Pancreas (tissue), 10 donors: ENCODE measurements at regions of chr19 and their contacts with region 1.

Region 1: GRCh38 chr19:12847159-12848139 is 9.1 kb downstream of the MAST1 start:
- DNase-seq: peak; percentile 73 to 99 (median 91)
- ATAC-seq: peak; percentile 99 to 100 (median 100)
- H3K4me3 ChIP-seq: peak overlapping the region in 1 of 4 donors; percentile 20
- H3K27ac ChIP-seq: no peak overlapping the region
- H3K4me1 ChIP-seq: peaks cover 0 to 3% (median 0%) of the 10 kb centered on the region in 3 donors
- H3K27me3 ChIP-seq: no peaks in the 10 kb centered on the region
- CTCF ChIP-seq: peak; percentile 99 to 100 (median 99)

Region 2: GRCh38 chr19:12574036-12574435 is 273.4 kb before region 1 on chr19:
- intact Hi-C with region 1: loop called in 1 of 3 experiments (anchors 10 kb)
- DNase-seq: no peak
- ATAC-seq: no peak
- H3K4me3 ChIP-seq: no peak overlapping the region
- H3K27ac ChIP-seq: no peak overlapping the region
- H3K4me1 ChIP-seq: no peaks in the 10 kb centered on the region
- H3K27me3 ChIP-seq: no peaks in the 10 kb centered on the region
- CTCF ChIP-seq: no peak

Region 3: GRCh38 chr19:12666265-12667048 is 181.0 kb before region 1 on chr19 and contains the starts of genes MAN2B1 and WDR83:
- intact Hi-C with region 1: no loop called
- DNase-seq: peak in 5 of 6 donors; percentile 58 to 88 (median 72)
- ATAC-seq: peak; percentile 77 to 87 (median 84)
- H3K4me3 ChIP-seq: peak within 1 kb of the TSS; percentile 75 to 84 (median 82)
- H3K27ac ChIP-seq: peak within 1 kb of the TSS in 3 of 4 donors; percentile 33 to 63 (median 40)
- H3K4me1 ChIP-seq: peaks cover 4 to 29% (median 7%) of the 10 kb centered on the region in 3 donors
- H3K27me3 ChIP-seq: no peaks in the 10 kb centered on the region
- CTCF ChIP-seq: no peak
- total RNA-seq, gene MAN2B1: 33.2 to 92.8 (median 59.2) TPM
- total RNA-seq, gene WDR83: 3.5 to 8.8 (median 5.7) TPM

Region 4: GRCh38 chr19:12696366-12697335 is 150.8 kb before region 1 on chr19 and contains the start of gene FBXW9:
- intact Hi-C with region 1: no loop called
- DNase-seq: peak; percentile 90 to 98 (median 94)
- ATAC-seq: peak; percentile 92 to 96 (median 96)
- H3K4me3 ChIP-seq: peak within 1 kb of the TSS; percentile 61 to 88 (median 80)
- H3K27ac ChIP-seq: peak within 1 kb of the TSS; percentile 66 to 78 (median 73)
- H3K4me1 ChIP-seq: peaks cover 3 to 9% (median 6%) of the 10 kb centered on the region in 3 donors
- H3K27me3 ChIP-seq: no peaks in the 10 kb centered on the region
- CTCF ChIP-seq: no peak
- total RNA-seq, gene FBXW9: 3.1 to 5.0 (median 4.2) TPM

Region 5: DNA sequence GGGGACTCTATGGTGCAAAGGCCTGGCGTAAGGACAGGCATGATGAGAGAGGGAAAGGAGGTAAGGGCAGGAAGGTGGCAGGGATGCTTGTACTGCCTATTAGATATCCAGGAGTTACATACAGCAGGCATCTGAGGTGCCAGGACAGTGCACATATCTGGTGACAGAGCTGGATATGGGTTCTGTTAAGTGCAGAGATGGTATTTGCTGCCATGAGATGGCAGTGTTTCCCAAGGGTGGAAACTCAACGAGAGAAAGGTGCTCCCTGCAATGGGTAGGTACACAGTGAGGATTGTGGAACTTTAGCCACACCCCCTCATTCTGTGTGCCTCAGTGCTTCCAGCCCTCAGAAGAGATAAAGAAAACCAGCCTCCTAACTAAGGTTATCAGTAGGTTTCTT is 130.6 kb before region 1 on chr19:
- intact Hi-C with region 1: loop called in 1 of 3 experiments (anchors 10 kb)
- DNase-seq: no peak
- ATAC-seq: peak in 3 of 4 donors; percentile 45 to 68 (median 61)
- H3K4me3 ChIP-seq: no peak overlapping the region
- H3K27ac ChIP-seq: no peak overlapping the region
- H3K4me1 ChIP-seq: peaks cover 0 to 8% (median 8%) of the 10 kb centered on the region in 3 donors
- H3K27me3 ChIP-seq: no peaks in the 10 kb centered on the region
- CTCF ChIP-seq: no peak

Region 6: DNA sequence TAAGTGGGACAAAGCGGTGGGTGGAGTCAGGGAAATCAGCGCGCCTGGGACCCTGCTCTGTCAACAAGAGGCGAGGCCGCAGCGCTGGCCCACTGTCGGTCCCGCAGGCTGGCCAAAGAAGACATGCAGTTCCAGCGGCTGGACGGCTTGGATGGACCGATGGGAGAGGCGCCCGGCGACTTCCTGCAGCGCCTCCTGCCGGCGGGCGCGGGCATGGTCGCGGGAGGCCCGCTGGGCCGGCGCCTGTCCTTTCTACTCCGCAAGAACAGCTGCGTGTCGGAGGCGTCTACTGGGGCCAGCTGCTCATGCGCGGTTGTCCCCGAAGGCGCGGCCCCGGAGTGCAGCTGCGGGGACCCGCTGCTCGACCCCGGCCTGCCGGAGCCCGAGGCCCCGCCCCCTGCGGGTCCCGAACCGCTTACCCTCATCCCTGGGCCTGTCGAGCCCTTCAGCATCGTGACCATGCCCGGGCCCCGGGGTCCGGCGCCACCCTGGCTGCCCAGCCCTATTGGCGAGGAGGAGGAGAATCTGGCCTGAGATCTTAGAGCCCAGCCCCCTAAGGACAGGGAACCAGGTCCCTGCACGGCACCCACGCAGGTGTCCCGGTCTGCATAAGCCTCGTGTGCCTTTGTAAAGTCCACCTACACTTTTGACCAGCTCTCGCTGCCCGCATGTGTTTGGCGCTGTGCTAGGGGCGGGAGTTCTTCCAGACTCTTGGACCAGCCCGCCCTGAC is 89.7 kb before region 1 on chr19:
- intact Hi-C with region 1: loop called in 2 of 3 experiments (anchors 5 to 10 kb)
- DNase-seq: peak; percentile 53 to 88 (median 78)
- ATAC-seq: peak; percentile 86 to 91 (median 90)
- H3K4me3 ChIP-seq: peak overlapping the region in 3 of 4 donors; percentile 1 to 38 (median 23)
- H3K27ac ChIP-seq: no peak overlapping the region
- H3K4me1 ChIP-seq: no peaks in the 10 kb centered on the region
- H3K27me3 ChIP-seq: no peaks in the 10 kb centered on the region
- CTCF ChIP-seq: peak; percentile 81 to 96 (median 92)